Panc1 (cell line): ENCODE measurements at regions of chr5 and their contacts with region 1.

Region 1: DNA sequence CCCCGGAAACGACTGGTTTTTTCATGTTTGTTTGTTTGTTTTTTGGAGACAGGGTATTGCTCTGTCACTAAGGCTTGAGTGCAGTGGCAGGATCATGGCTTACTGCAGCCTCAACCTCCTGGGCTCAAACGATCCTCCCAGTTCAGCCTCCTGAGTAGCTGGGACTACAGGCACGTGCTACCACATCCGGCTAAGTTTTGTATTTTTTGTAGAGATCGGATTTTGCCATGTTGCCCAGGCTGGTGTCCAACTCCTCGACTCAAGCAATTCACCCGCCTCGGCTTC is 24.6 kb upstream of the AFF4 start:
- DNase-seq: no peak
- ATAC-seq: no peak; the same call in 1 of the 2 replicates
- H3K4me3 ChIP-seq: no peak overlapping the region
- H3K27ac ChIP-seq: no peak overlapping the region
- H3K4me1 ChIP-seq: no peaks in the 10 kb centered on the region
- H3K27me3 ChIP-seq: no peaks in the 10 kb centered on the region
- CTCF ChIP-seq: no peak

Region 2: DNA sequence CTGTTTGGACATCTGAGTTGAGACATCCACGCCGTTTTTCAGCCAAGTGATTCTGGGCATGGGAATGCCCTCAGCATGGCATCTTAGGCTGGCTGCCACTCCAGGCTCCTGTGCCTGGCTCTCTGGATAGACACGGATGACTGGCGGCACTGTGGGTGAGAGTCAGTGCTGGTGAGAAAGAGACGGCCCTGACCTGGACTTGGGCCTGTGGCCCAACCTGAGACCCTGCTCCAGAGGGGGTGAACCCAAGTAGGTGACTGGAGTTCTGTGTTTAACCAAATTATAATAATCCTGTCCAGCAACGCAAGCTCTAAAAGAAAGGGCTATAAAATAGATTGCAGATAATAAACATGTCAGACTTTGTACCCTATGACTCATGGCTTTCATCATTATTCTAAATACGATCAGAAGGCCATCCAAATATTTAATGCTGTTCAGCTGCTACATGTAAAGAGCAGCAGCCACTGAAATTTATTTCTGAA is 237.6 kb after region 1 on chr5:
- CTCF ChIA-PET with region 1: no interaction called
- POLR2A ChIA-PET with region 1: no interaction called
- in situ Hi-C with region 1: no loop called
- intact Hi-C with region 1: no loop called
- DNase-seq: no peak
- ATAC-seq: no peak
- H3K4me3 ChIP-seq: no peak overlapping the region
- H3K27ac ChIP-seq: no peak overlapping the region
- H3K4me1 ChIP-seq: no peaks in the 10 kb centered on the region
- H3K27me3 ChIP-seq: no peaks in the 10 kb centered on the region
- CTCF ChIP-seq: no peak

Region 3: GRCh38 chr5:133278317-133278716 is 290.3 kb after region 1 on chr5:
- CTCF ChIA-PET with region 1: no interaction called
- POLR2A ChIA-PET with region 1: interaction called, 11 read pairs
- in situ Hi-C with region 1: no loop called
- intact Hi-C with region 1: no loop called
- DNase-seq: no peak
- ATAC-seq: no peak
- H3K4me3 ChIP-seq: no peak overlapping the region
- H3K27ac ChIP-seq: no peak overlapping the region
- H3K4me1 ChIP-seq: no peaks in the 10 kb centered on the region
- H3K27me3 ChIP-seq: no peaks in the 10 kb centered on the region
- CTCF ChIP-seq: no peak